Posterior vena cava (tissue), 2 donors: ENCODE measurements at regions of chr7 and their contacts with region 1.

Region 1: GRCh38 chr7:74401137-74401859 is 52.4 kb upstream of the GTF2IRD1 start:
- DNase-seq: peak; percentile 84

Region 2: DNA sequence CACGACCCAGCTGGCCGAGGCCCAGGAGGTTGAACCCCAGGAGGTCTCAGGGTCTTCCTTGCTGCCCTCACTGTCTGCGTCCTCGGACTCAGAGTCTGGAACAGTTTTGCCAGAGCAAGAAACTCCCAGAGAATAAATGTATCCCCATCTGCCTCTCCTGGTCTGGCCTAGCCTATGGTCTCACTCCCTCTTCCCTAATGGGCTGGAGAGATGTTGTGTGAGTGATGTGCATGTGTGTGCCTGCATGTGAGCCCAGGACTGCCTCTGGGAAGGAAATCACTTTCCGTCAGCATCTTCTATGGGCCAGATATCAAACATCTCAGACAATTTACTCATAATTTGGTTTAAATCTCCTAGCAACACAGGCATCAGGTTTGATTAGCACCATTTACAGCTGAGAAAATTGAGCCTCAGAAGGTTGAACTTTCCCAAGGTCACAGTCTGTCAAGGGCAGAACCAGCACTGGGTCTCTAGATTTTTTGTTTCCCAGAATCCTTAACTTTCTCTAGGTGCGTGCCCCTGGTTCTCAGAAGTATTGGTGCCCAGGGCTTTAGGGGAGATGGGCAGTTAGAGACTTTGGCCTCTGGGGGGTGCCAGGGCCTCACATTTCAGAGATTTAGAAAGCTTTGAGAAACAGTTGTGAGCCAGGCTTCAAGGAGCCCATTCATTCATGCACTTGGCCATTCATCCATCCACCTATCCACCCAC is 535.4 kb before region 1 on chr7:
- intact Hi-C with region 1: loop called (anchors 5 to 10 kb)
- DNase-seq: no peak